Gastrocnemius medialis (tissue), 4 donors: ENCODE measurements at regions of chr21 and their contacts with region 1.

Region 1: DNA sequence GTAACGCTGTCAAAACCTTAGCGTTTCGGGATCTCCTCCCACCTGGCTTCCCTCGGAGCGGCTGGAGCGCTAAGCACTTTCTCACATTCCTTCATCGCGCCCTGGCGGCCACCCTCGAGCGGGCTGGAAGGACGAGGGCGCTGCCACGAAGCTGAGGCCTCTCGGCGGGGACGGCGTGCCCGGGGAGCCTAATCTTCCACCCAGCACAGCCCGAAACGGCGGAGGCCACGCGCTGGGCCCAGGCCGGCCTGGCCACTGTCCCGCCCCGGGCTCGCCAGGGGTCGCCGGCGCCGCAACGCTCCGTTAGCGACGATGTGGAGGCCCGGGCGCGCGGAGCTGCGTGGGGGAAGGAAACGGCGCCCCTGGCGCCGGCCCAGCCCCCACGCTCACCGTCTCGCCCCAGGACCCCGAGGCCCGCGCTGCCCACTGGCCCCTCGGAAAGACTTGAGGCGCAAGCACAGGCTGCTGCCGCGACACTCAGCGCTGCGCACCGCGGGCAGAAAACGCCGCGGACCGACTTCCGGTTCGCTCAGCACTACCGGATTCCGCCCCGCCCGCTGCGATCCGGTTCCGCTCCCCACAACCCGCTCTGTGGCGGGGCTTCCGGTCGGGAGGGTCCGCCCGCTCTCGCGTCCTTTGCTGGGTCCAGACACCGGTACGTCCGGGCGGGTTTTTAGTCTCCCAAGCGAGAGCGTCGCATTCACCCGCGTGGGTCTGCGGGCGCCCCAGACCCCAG is at the start of gene YBEY:
- DNase-seq: peak; percentile 81 to 85
- ATAC-seq: peak; percentile 97
- H3K4me3 ChIP-seq: peak within 1 kb of the TSS; percentile 75 to 93 (median 88)
- H3K27ac ChIP-seq: peak within 1 kb of the TSS; percentile 85 to 98 (median 92)
- H3K4me1 ChIP-seq: peaks cover 42 to 45% of the 10 kb centered on the region in 2 donors
- H3K27me3 ChIP-seq: no peaks in the 10 kb centered on the region
- CTCF ChIP-seq: peak; percentile 17 to 55 (median 49)
- POLR2A ChIP-seq: peak; percentile 67 to 83
- total RNA-seq, gene YBEY: 11.3 to 27.9 (median 18.7) TPM

Region 2: DNA sequence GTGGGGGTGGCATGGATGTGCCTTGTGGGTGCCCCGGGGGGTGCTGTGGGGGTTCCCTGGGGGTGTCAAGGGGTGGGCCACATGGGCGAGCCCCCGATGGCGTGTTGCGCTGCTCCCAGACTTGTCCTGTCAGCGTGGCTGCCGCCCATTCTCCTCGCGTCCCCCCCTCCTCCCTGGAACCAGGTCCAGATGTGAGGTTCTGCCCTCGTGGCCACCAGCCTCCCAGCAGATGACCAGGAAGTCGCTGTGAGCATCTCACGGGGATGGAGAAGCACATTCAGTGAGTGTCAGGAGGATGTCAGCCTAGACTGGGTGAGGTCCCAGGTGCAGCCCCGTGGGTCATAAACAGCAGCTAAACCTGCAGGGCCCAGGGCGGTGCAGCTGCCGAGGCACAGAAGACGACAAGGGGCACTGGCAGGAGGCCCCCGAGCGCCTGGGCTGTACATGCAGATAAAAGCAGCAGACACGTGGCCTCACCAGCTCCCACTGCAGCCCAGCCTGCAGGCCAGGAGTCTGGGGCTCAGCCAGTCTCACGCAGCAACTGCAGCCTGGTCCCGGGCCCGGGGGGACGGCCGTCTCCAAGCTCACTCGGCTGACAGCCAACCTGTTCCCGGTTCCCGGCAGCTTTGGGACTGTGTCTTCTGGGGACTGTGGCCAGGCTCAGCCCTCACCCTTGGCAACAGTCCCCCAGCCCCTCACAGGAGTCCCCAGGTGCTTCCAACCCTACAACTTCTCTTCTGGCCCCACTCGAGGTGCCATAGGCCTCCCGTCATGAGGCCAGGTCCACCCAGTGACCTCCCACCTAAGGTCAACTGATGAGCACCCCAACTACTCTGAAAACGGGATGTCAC is 205.5 kb before region 1 on chr21:
- in situ Hi-C with region 1: no loop called
- intact Hi-C with region 1: no loop called
- DNase-seq: peak in 1 of 2 donors; percentile 16
- ATAC-seq: no peak
- H3K4me3 ChIP-seq: no peak overlapping the region
- H3K27ac ChIP-seq: peak overlapping the region in 1 of 4 donors; percentile 38
- H3K4me1 ChIP-seq: no peaks in the 10 kb centered on the region
- H3K27me3 ChIP-seq: peaks cover 20 to 48% (median 32%) of the 10 kb centered on the region in 3 donors
- CTCF ChIP-seq: no peak
- POLR2A ChIP-seq: no peak

Region 3: DNA sequence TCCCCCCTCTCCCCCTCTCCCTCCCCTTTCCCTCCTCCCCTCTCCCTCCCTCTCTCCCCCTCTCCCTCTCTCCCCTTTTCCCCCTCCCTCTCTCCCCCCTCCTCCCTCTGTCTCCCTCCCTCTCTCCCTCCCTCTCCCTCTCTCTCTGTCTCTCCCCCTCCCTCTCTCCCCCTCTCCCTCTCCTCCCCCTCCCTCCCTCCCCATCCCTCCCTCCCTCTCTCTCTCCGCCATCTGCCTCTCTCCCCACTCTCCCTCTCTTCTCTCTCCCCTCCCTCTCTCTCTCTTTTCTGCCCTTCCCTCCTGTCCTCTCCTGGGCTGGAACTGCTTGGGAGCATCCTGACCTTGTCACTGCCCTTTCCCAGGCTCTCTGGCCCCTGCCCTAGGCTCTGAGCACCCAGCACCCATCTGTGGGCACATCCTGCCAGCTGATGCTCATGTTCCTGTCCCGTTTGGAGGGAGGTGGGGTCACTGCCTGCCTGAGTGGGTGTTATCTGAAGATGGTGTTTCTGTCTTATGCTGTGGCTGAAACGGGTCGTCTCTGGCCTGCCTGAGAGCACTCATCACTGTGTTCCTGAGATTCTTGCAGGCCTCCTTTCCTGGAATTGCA is 141.4 kb before region 1 on chr21:
- in situ Hi-C with region 1: no loop called
- intact Hi-C with region 1: loop called (anchors 5 kb)
- DNase-seq: no peak
- ATAC-seq: no peak
- H3K4me3 ChIP-seq: no peak overlapping the region
- H3K27ac ChIP-seq: no peak overlapping the region
- H3K4me1 ChIP-seq: no peaks in the 10 kb centered on the region
- H3K27me3 ChIP-seq: no peaks in the 10 kb centered on the region
- CTCF ChIP-seq: no peak
- POLR2A ChIP-seq: no peak

Region 4: DNA sequence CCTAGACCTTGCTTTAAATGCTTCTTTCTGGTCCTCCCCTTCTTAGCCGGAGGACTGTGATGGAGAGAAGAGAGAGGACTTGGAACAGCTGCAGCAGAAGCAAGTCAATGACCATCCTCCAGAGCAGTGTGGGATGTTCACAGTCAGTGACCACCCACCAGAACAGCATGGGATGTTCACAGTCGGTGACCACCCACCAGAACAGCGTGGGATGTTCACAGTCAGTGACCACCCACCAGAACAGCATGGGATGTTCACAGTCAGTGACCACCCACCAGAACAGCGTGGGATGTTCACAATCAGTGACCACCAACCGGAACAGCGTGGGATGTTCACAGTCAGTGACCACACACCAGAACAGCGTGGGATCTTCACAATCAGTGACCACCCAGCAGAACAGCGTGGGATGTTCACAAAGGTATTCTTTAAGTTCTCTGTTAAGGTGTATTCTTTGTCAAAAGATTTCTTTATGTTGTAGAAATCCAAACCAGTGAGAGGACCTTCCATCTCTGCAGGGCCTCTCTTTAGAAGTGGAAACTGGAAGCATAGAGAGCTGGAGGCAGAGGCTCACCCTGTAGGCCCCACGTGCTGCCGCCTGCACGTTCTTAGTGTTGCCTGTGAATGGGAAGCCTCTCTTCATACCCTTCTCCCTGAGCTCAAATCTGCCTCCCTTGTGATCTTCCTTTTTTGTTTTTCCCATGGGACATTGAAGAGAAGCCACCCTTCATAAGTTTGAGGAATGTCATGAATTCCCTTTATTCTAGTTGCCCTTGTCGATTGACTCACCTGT is 48.6 kb after region 1 on chr21:
- in situ Hi-C with region 1: no loop called
- intact Hi-C with region 1: no loop called
- DNase-seq: no peak
- ATAC-seq: no peak
- H3K4me3 ChIP-seq: no peak overlapping the region
- H3K27ac ChIP-seq: no peak overlapping the region
- H3K4me1 ChIP-seq: no peaks in the 10 kb centered on the region
- H3K27me3 ChIP-seq: no peaks in the 10 kb centered on the region
- CTCF ChIP-seq: no peak
- POLR2A ChIP-seq: no peak

Region 5: GRCh38 chr21:46458315-46459023 is 172.5 kb after region 1 on chr21 and contains the start of gene DIP2A:
- in situ Hi-C with region 1: no loop called
- intact Hi-C with region 1: loop called (anchors 5 kb)
- DNase-seq: peak; percentile 94 to 96
- ATAC-seq: peak; percentile 78 to 85
- H3K4me3 ChIP-seq: peak within 1 kb of the TSS; percentile 70 to 96 (median 92)
- H3K27ac ChIP-seq: peak within 1 kb of the TSS; percentile 87 to 97 (median 96)
- H3K4me1 ChIP-seq: peaks cover 49 to 63% of the 10 kb centered on the region in 2 donors
- H3K27me3 ChIP-seq: no peaks in the 10 kb centered on the region
- CTCF ChIP-seq: peak in 1 of 5 experiments; percentile 20
- POLR2A ChIP-seq: peak; percentile 94 to 98
- total RNA-seq, gene DIP2A: 6.3 to 15.5 (median 11.8) TPM